ENCODE measurements at regions of chr17 and their contacts with region 1.

Region 1: DNA sequence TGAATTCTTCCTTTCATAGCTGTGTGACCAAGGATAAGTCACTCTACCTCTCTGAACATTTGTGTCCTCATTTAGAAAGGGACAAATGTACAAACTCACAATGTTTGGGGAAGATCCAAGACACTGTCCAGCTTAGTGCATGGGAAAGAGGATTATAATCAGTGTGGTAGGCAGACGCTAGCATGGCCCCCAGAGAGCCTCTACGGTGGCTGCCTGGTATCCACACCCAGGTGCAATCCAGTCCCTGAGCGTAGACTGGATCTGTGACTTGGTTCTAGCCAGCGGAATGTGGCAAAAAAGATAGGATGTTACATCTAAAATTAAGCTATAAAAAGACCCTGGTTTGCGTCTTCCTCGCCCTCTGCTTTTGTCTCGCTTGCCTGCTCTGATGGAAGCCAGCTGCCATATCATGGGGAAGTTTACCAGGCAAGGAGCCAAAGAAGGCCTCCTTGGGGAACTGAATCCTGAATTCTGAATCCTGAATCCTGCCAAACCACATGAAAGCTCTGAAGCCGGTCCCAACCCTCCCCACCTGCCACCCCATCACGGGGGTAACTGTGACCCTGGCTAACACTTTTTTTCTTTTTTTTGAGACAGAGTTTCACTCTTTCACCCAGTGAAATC is 51.7 kb downstream of the PLXDC1 start:
- DNase-seq: no peak
- H3K4me3 Mint-ChIP-seq: no peak overlapping the region
- H3K27ac Mint-ChIP-seq: no peak overlapping the region
- H3K4me1 Mint-ChIP-seq: peaks cover 54% of the 10 kb centered on the region
- H3K27me3 Mint-ChIP-seq: no peaks in the 10 kb centered on the region

Region 2: DNA sequence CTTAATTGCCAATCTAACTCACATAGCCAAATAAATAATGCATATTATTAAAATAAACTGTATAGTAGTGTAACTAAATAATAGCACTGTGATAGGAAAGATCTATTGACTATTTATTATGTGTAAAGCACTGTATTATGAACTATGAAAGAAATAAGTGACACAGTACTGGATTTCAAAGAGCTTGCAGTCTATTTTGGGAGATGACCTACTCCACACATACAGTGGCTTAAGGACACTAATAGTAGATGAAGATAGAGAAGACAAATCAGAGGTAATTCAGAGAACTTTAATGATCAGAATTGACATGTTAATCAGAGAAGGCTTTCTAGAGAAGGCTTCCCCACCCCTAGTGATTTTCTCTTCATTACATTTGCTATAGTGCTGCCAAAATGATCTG is 159.8 kb before region 1 on chr17:
- CTCF ChIA-PET with region 1: no interaction called
- intact Hi-C with region 1: no loop called
- DNase-seq: no peak
- H3K4me3 Mint-ChIP-seq: no peak overlapping the region
- H3K27ac Mint-ChIP-seq: no peak overlapping the region
- H3K4me1 Mint-ChIP-seq: peaks cover 13% of the 10 kb centered on the region
- H3K27me3 Mint-ChIP-seq: no peaks in the 10 kb centered on the region

Region 3: GRCh38 chr17:39036014-39036413 is 63.8 kb before region 1 on chr17:
- CTCF ChIA-PET with region 1: no interaction called
- intact Hi-C with region 1: loop called (anchors 10 kb)
- DNase-seq: no peak
- H3K4me3 Mint-ChIP-seq: no peak overlapping the region
- H3K27ac Mint-ChIP-seq: no peak overlapping the region
- H3K4me1 Mint-ChIP-seq: no peaks in the 10 kb centered on the region
- H3K27me3 Mint-ChIP-seq: no peaks in the 10 kb centered on the region

Region 4: DNA sequence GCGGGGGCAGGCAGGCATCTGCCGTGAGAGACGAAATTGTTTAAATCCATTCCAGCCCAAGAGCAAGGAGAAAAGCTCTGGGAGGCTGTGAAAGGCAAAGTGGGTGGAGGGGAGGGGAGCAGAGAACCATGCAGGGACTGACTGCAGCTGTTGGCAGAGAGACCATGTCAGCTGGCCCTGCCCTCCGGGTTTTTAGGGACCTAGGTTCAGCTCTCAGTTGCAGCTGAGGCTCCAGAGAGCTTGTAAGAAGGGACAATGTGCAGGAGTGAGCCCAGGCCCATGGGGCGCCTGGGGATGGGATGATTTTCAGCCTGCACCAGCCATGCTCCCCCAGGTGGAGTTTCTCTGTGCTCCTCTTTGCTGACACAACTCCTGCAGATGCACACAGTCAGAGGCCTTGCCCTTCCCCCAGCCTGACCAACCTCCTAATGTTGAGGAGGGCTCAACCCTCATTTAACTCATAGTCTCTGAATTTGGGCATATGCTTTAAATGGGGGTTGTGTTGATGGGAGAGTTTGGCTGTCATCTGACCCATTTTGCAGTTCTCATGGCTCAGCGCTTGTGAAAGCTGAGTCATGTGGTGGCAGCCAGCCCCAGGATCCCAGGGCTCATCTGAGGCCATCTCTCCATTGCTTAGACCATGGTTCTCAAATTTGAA is 19.2 kb before region 1 on chr17:
- CTCF ChIA-PET with region 1: no interaction called
- intact Hi-C with region 1: no loop called
- DNase-seq: no peak
- H3K4me3 Mint-ChIP-seq: no peak overlapping the region
- H3K27ac Mint-ChIP-seq: no peak overlapping the region
- H3K4me1 Mint-ChIP-seq: no peaks in the 10 kb centered on the region
- H3K27me3 Mint-ChIP-seq: no peaks in the 10 kb centered on the region